ENCODE measurements at regions of chr6 and their contacts with region 1.

Region 1: GRCh38 chr6:139290787-139291311 is 949 bp downstream of the TXLNB start:
- DNase-seq: peak; percentile 79
- H3K4me3 ChIP-seq: no peak overlapping the region
- H3K27ac ChIP-seq: peak overlapping the region; percentile 9
- H3K4me1 ChIP-seq: peaks cover 9% of the 10 kb centered on the region
- H3K27me3 ChIP-seq: no peaks in the 10 kb centered on the region
- CTCF ChIP-seq: no peak
- POLR2A ChIP-seq: no peak

Region 2: GRCh38 chr6:139323511-139324300 is 32.9 kb after region 1 on chr6:
- CTCF ChIA-PET with region 1: interaction called, 3 read pairs
- POLR2A ChIA-PET with region 1: no interaction called
- dilution Hi-C with region 1: no loop called
- intact Hi-C with region 1: loop called (anchors 1 kb)
- DNase-seq: peak; percentile 71
- H3K4me3 ChIP-seq: peak overlapping the region in 2 of 3 experiments; percentile 8 to 9
- H3K27ac ChIP-seq: peak overlapping the region; percentile 71
- H3K4me1 ChIP-seq: peaks cover 6% of the 10 kb centered on the region
- H3K27me3 ChIP-seq: no peaks in the 10 kb centered on the region
- CTCF ChIP-seq: no peak
- POLR2A ChIP-seq: no peak

Measured in endothelial cell of umbilical vein (primary cell).